Heart right ventricle (tissue), 16 donors: ENCODE measurements at regions of chr20 and their contacts with region 1.

Region 1: GRCh38 chr20:37990571-37991151 is 42.6 kb downstream of the TTI1 start:
- DNase-seq: peak; percentile 64
- ATAC-seq: peak; percentile 36 to 80 (median 54)
- H3K4me3 ChIP-seq: no peak overlapping the region
- H3K27ac ChIP-seq: peak overlapping the region; percentile 61 to 88 (median 80)
- H3K4me1 ChIP-seq: peaks cover 44 to 88% (median 65%) of the 10 kb centered on the region in 9 donors
- H3K27me3 ChIP-seq: no peaks in the 10 kb centered on the region
- CTCF ChIP-seq: no peak

Region 2: DNA sequence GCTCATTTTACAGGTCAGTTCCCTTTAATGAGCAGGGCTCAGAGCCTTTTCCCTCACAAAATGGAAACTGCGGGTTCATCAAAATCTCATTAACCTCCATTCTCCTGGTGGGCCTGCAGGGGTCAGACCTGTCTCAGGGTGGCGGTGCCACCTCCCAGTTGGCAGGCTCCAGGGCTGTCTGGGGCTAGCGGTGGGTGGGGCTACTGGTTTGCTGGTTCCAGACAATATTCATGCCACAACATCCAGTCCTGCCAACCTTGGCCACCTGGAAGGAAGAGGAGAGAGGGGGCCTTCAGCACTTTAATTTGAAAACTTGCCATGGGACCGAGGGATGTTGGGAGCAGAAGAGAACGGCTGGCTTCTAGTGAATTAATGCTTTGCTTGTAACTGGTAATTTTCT is 338.7 kb before region 1 on chr20:
- intact Hi-C with region 1: loop called in 2 of 10 experiments (anchors 5 to 10 kb)
- DNase-seq: peak; percentile 26 to 35
- ATAC-seq: peak; percentile 44 to 91 (median 82)
- H3K4me3 ChIP-seq: no peak overlapping the region
- H3K27ac ChIP-seq: no peak overlapping the region
- H3K4me1 ChIP-seq: peaks cover 0 to 17% (median 7%) of the 10 kb centered on the region in 9 donors
- H3K27me3 ChIP-seq: no peaks in the 10 kb centered on the region
- CTCF ChIP-seq: peak; percentile 7 to 59 (median 42)

Region 3: DNA sequence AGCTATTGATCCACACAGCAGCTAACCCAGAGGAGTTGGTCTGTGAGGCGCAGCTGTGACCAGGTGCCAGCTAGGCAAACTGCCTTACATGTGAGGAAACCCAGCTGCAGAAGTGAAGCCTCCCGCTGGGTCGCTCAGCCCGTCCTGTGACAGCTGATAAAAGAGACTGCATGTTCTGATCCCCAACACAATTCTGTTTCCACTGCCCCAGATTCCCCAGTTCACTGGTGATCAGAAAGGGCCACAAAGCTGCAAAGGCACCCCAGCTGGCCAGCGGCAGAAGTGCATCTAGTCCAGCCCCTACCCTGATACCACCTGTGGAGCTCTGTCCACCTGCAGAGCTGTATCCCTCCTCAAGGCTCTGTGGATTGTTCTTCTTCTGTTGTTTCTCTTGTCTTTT is 232.3 kb before region 1 on chr20:
- intact Hi-C with region 1: loop called in 7 of 10 experiments (anchors 5 to 10 kb)
- DNase-seq: peak in 1 of 2 donors; percentile 6
- ATAC-seq: peak in 2 of 8 donors; percentile 39 to 75
- H3K4me3 ChIP-seq: no peak overlapping the region
- H3K27ac ChIP-seq: no peak overlapping the region
- H3K4me1 ChIP-seq: peaks cover 0 to 5% (median 0%) of the 10 kb centered on the region in 9 donors
- H3K27me3 ChIP-seq: no peaks in the 10 kb centered on the region
- CTCF ChIP-seq: no peak

Region 4: GRCh38 chr20:37845241-37845711 is 145.4 kb before region 1 on chr20:
- intact Hi-C with region 1: loop called in 1 of 10 experiments (anchors 2 kb)
- DNase-seq: peak; percentile 13 to 58
- ATAC-seq: peak; percentile 38 to 96 (median 88)
- H3K4me3 ChIP-seq: no peak overlapping the region
- H3K27ac ChIP-seq: peak overlapping the region in 1 of 10 donors; percentile 31
- H3K4me1 ChIP-seq: peaks cover 0 to 14% (median 3%) of the 10 kb centered on the region in 9 donors
- H3K27me3 ChIP-seq: no peaks in the 10 kb centered on the region
- CTCF ChIP-seq: no peak

Region 5: GRCh38 chr20:37901654-37902503 is 88.8 kb before region 1 on chr20:
- intact Hi-C with region 1: loop called in 5 of 10 experiments (anchors 2 to 10 kb)
- DNase-seq: no peak
- ATAC-seq: peak; percentile 47 to 84 (median 71)
- H3K4me3 ChIP-seq: peak overlapping the region in 7 of 10 donors; percentile 36 to 47 (median 41)
- H3K27ac ChIP-seq: no peak overlapping the region
- H3K4me1 ChIP-seq: peaks cover 1 to 24% (median 12%) of the 10 kb centered on the region in 9 donors
- H3K27me3 ChIP-seq: peaks cover 9 to 71% (median 64%) of the 10 kb centered on the region in 7 donors
- CTCF ChIP-seq: peak in 7 of 9 donors; percentile 21 to 52 (median 35)